ENCODE measurements at regions of chr10 and their contacts with region 1.

Region 1: GRCh38 chr10:106980495-106981451 is 183.7 kb downstream of the SORCS1 start:
- DNase-seq: no peak
- H3K4me3 ChIP-seq: no peak overlapping the region
- H3K27ac ChIP-seq: no peak overlapping the region
- H3K4me1 ChIP-seq: peaks cover 0 to 22% (median 4%) of the 10 kb centered on the region in 4 donors
- H3K27me3 ChIP-seq: no peaks in the 10 kb centered on the region
- CTCF ChIP-seq: no peak
- EP300 ChIP-seq: no peak
- POLR2A ChIP-seq: no peak

Region 2: GRCh38 chr10:108840944-108841343 is 1860.2 kb after region 1 on chr10:
- in situ Hi-C with region 1: no loop called
- intact Hi-C with region 1: loop called (anchors 5 kb)
- DNase-seq: no peak
- H3K4me3 ChIP-seq: no peak overlapping the region
- H3K27ac ChIP-seq: no peak overlapping the region
- H3K4me1 ChIP-seq: no peaks in the 10 kb centered on the region
- H3K27me3 ChIP-seq: no peaks in the 10 kb centered on the region
- CTCF ChIP-seq: no peak
- EP300 ChIP-seq: no peak
- POLR2A ChIP-seq: no peak

Measured in transverse colon (tissue), 4 donors.